ENCODE measurements at regions of chr5 and their contacts with region 1.

Region 1: GRCh38 chr5:132386644-132387286 is 17.3 kb downstream of the SLC22A5 start:
- DNase-seq: peak; percentile 62
- ATAC-seq: peak; percentile 92
- H3K4me3 Mint-ChIP-seq: no peak overlapping the region
- H3K27ac Mint-ChIP-seq: peak overlapping the region; percentile 39
- H3K4me1 Mint-ChIP-seq: peaks cover 21% of the 10 kb centered on the region
- H3K27me3 Mint-ChIP-seq: no peaks in the 10 kb centered on the region
- CTCF ChIP-seq: no peak

Region 2: GRCh38 chr5:132238169-132238744 is 148.5 kb before region 1 on chr5:
- CTCF ChIA-PET with region 1: interaction called, 4 read pairs
- POLR2A ChIA-PET with region 1: no interaction called
- intact Hi-C with region 1: loop called (anchors 1 kb)
- DNase-seq: peak; percentile 59
- ATAC-seq: peak; percentile 90
- H3K4me3 Mint-ChIP-seq: no peak overlapping the region
- H3K27ac Mint-ChIP-seq: no peak overlapping the region
- H3K4me1 Mint-ChIP-seq: no peaks in the 10 kb centered on the region
- H3K27me3 Mint-ChIP-seq: peaks cover 4% of the 10 kb centered on the region
- CTCF ChIP-seq: no peak

Region 3: GRCh38 chr5:132260714-132261551 is 125.8 kb before region 1 on chr5:
- CTCF ChIA-PET with region 1: no interaction called
- POLR2A ChIA-PET with region 1: no interaction called
- intact Hi-C with region 1: no loop called
- DNase-seq: no peak
- ATAC-seq: no peak
- H3K4me3 Mint-ChIP-seq: no peak overlapping the region
- H3K27ac Mint-ChIP-seq: no peak overlapping the region
- H3K4me1 Mint-ChIP-seq: no peaks in the 10 kb centered on the region
- H3K27me3 Mint-ChIP-seq: peaks cover 13% of the 10 kb centered on the region
- CTCF ChIP-seq: no peak

Region 4: DNA sequence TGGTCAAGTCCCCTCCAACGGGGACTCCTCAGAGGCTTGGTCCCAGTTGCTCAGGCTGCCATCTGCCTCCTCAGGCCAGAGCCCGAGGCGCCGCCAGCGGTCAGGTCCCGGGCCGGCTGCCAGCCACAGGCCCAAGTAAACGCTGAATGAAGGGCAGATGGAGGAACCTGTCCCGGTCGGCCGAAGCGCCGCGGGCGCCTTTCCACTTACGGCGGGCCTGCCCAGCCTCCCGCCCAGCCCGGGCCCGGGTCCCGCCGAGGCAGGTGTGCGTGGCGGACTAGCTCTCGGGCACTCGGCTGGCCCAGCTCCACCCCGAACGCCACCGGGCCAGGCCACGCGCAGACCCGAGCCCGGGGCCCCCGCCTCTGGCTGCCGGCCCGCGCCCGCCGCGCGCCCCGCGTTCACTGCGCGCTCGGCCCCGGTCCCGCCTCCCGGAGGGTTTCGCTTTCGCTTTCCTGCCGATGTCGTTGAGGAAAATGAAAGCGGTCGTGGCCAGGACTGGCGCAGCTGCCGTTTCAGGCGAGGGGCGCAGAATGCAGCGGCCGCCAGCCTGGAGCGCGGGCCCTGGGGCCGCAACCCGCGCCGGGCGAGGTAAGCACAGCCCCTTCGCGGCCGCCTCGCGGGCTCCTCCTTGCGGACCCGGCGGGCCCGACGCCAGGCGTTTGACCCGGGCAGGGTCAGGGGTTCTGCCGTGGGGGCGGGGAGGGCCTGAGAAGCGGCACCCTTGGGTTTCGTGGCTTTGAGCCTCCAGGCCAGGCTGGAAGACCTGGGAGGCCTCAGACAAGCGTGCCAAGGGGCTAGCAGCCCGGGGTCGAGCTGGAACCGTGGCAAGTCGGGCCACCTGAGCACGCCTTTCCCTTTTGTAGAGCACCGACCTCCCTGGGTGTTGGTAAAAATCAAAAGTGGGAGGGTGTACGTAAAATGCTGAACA is 24.0 kb after region 1 on chr5:
- CTCF ChIA-PET with region 1: interaction called, 17 read pairs
- POLR2A ChIA-PET with region 1: interaction called, 9 read pairs
- intact Hi-C with region 1: loop called (anchors 1 kb)
- DNase-seq: peak; percentile 85
- ATAC-seq: peak; percentile 86
- H3K4me3 Mint-ChIP-seq: peak overlapping the region; percentile 94
- H3K27ac Mint-ChIP-seq: peak overlapping the region; percentile 99
- H3K4me1 Mint-ChIP-seq: peaks cover 75% of the 10 kb centered on the region
- H3K27me3 Mint-ChIP-seq: no peaks in the 10 kb centered on the region
- CTCF ChIP-seq: no peak

Region 5: GRCh38 chr5:132566657-132567056 is 179.9 kb after region 1 on chr5:
- CTCF ChIA-PET with region 1: no interaction called
- POLR2A ChIA-PET with region 1: no interaction called
- intact Hi-C with region 1: loop called (anchors 5 kb)
- DNase-seq: no peak
- ATAC-seq: no peak
- H3K4me3 Mint-ChIP-seq: no peak overlapping the region
- H3K27ac Mint-ChIP-seq: no peak overlapping the region
- H3K4me1 Mint-ChIP-seq: no peaks in the 10 kb centered on the region
- H3K27me3 Mint-ChIP-seq: no peaks in the 10 kb centered on the region
- CTCF ChIP-seq: no peak

Region 6: GRCh38 chr5:132820162-132820754 is 433.5 kb after region 1 on chr5:
- CTCF ChIA-PET with region 1: interaction called, 31 read pairs
- POLR2A ChIA-PET with region 1: no interaction called
- intact Hi-C with region 1: loop called (anchors 1 kb)
- DNase-seq: peak; percentile 70
- ATAC-seq: peak; percentile 89
- H3K4me3 Mint-ChIP-seq: peak overlapping the region; percentile 38
- H3K27ac Mint-ChIP-seq: no peak overlapping the region
- H3K4me1 Mint-ChIP-seq: peaks cover 12% of the 10 kb centered on the region
- H3K27me3 Mint-ChIP-seq: peaks cover 27% of the 10 kb centered on the region
- CTCF ChIP-seq: no peak

Measured in activated B cell treated with CpG ODN at 0.5 μM for 24 hours (primary cell).